Endothelial cell of umbilical vein (primary cell): ENCODE measurements at regions of chr6 and their contacts with region 1.

Region 1: GRCh38 chr6:133553652-133554051 is 312.5 kb downstream of the EYA4 start:
- DNase-seq: peak; percentile 44
- H3K4me3 ChIP-seq: no peak overlapping the region
- H3K27ac ChIP-seq: no peak overlapping the region
- H3K4me1 ChIP-seq: no peaks in the 10 kb centered on the region
- H3K27me3 ChIP-seq: peaks cover 2 to 4% of the 10 kb centered on the region in 2 experiments
- CTCF ChIP-seq: peak; percentile 23 to 37
- POLR2A ChIP-seq: no peak

Region 2: DNA sequence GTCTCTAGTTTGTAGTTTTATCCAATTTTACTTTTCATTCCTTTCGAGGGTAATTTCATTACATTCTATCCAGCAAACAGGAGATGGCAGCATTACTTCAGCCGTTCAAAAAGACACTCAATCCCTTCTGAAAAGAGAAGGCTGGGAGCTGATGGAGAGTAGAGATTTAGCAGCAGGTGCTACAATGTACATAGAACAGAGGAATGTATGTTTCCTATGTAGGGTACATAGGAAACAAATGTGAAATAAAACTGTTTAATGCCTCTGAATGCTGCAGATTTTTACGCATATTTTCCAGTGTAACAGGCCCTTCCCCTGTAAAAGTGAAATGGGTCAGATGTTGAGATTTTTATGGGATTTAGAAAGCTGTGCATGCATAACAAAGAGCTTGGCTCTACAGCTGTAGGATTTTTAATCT is 723.3 kb before region 1 on chr6:
- CTCF ChIA-PET with region 1: interaction called, 14 read pairs
- POLR2A ChIA-PET with region 1: no interaction called
- dilution Hi-C with region 1: no loop called
- intact Hi-C with region 1: loop called (anchors 1 kb)
- DNase-seq: peak; percentile 34
- H3K4me3 ChIP-seq: no peak overlapping the region
- H3K27ac ChIP-seq: no peak overlapping the region
- H3K4me1 ChIP-seq: no peaks in the 10 kb centered on the region
- H3K27me3 ChIP-seq: no peaks in the 10 kb centered on the region
- CTCF ChIP-seq: peak in 1 of 2 donors; percentile 18
- POLR2A ChIP-seq: no peak

Region 3: GRCh38 chr6:132952031-132952867 is 601.4 kb before region 1 on chr6:
- CTCF ChIA-PET with region 1: no interaction called
- POLR2A ChIA-PET with region 1: no interaction called
- dilution Hi-C with region 1: no loop called
- intact Hi-C with region 1: no loop called
- DNase-seq: no peak
- H3K4me3 ChIP-seq: no peak overlapping the region
- H3K27ac ChIP-seq: no peak overlapping the region
- H3K4me1 ChIP-seq: no peaks in the 10 kb centered on the region
- H3K27me3 ChIP-seq: no peaks in the 10 kb centered on the region
- CTCF ChIP-seq: no peak
- POLR2A ChIP-seq: no peak

Region 4: DNA sequence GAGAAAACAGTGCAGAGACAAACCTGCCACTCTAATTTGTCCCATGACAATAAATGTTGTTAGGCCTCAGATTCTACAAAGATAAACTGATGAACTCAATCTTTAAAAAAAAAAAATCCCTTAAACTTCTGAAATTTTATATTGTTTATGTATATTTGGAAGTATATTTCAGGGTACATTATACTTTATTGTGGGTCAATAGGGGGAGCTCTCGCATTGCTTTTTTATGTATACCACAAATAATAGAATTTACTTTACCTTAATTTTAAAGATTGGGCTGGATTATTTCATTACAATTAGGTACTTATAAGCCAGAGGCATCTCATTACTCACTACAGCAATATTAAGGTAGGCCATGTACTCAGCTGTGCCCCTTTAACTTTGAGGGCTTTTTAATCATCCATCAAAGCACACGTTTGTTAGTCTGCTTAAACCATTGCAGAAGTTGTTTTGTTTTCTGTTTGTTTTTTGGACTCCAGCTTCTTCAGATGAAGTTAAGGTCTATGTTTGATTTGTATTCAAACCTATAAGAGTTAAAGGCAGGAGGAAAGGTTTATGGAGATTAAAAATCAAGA is 368.8 kb before region 1 on chr6:
- CTCF ChIA-PET with region 1: interaction called, 19 read pairs
- POLR2A ChIA-PET with region 1: no interaction called
- dilution Hi-C with region 1: no loop called
- intact Hi-C with region 1: loop called (anchors 1 kb)
- DNase-seq: peak; percentile 32
- H3K4me3 ChIP-seq: no peak overlapping the region
- H3K27ac ChIP-seq: no peak overlapping the region
- H3K4me1 ChIP-seq: no peaks in the 10 kb centered on the region
- H3K27me3 ChIP-seq: no peaks in the 10 kb centered on the region
- CTCF ChIP-seq: peak; percentile 18 to 35
- POLR2A ChIP-seq: no peak

Region 5: GRCh38 chr6:133286765-133287164 is 266.9 kb before region 1 on chr6:
- CTCF ChIA-PET with region 1: no interaction called
- POLR2A ChIA-PET with region 1: no interaction called
- dilution Hi-C with region 1: no loop called
- intact Hi-C with region 1: loop called (anchors 2 kb)
- DNase-seq: peak; percentile 8
- H3K4me3 ChIP-seq: no peak overlapping the region
- H3K27ac ChIP-seq: no peak overlapping the region
- H3K4me1 ChIP-seq: no peaks in the 10 kb centered on the region
- H3K27me3 ChIP-seq: peaks cover 0 to 3% of the 10 kb centered on the region in 2 experiments
- CTCF ChIP-seq: no peak
- POLR2A ChIP-seq: no peak

Region 6: DNA sequence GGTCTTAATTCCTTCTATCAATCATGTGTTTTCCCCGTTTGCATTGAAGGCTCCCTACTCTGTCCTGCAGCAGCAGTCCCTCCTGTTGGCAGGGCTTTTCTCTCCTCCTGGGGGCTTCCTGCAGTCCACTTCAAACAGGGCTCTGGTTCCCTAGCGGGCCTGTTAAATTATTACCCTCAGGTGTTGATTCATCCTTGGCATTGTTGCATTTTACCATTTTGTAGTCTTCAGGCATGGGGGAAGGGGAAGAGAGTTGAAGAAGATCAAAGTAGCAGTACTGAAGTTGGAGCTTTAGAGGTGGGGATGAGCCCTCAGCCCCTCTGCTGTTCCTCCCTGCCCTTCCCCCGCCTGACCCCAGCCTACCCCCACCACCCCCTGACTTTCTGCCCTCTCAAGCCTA is 143.0 kb before region 1 on chr6:
- CTCF ChIA-PET with region 1: no interaction called
- POLR2A ChIA-PET with region 1: no interaction called
- dilution Hi-C with region 1: no loop called
- intact Hi-C with region 1: no loop called
- DNase-seq: no peak
- H3K4me3 ChIP-seq: no peak overlapping the region
- H3K27ac ChIP-seq: no peak overlapping the region
- H3K4me1 ChIP-seq: no peaks in the 10 kb centered on the region
- H3K27me3 ChIP-seq: no peaks in the 10 kb centered on the region
- CTCF ChIP-seq: no peak
- POLR2A ChIP-seq: no peak

Region 7: GRCh38 chr6:134074151-134075055 is 520.8 kb after region 1 on chr6:
- CTCF ChIA-PET with region 1: no interaction called
- POLR2A ChIA-PET with region 1: no interaction called
- dilution Hi-C with region 1: no loop called
- intact Hi-C with region 1: no loop called
- DNase-seq: peak; percentile 33
- H3K4me3 ChIP-seq: no peak overlapping the region
- H3K27ac ChIP-seq: no peak overlapping the region
- H3K4me1 ChIP-seq: peaks cover 10% of the 10 kb centered on the region
- H3K27me3 ChIP-seq: peaks cover 4% of the 10 kb centered on the region in 2 experiments
- CTCF ChIP-seq: no peak
- POLR2A ChIP-seq: no peak